ENCODE measurements at regions of chr2 and their contacts with region 1.

Region 1: GRCh38 chr2:138827426-138828054 is 47.4 kb upstream of the NXPH2 start:
- DNase-seq: peak; percentile 32 to 71
- H3K4me3 ChIP-seq: no peak overlapping the region
- H3K4me1 ChIP-seq: peaks cover 5% of the 10 kb centered on the region; the same call in 1 of the 2 replicates
- H3K27me3 ChIP-seq: no peaks in the 10 kb centered on the region

Region 2: GRCh38 chr2:137892739-137893138 is 934.8 kb before region 1 on chr2:
- in situ Hi-C with region 1: loop called (anchors 10 kb)
- DNase-seq: peak; percentile 8
- H3K4me3 ChIP-seq: no peak overlapping the region
- H3K4me1 ChIP-seq: peaks cover 3% of the 10 kb centered on the region; the same call in 1 of the 2 replicates
- H3K27me3 ChIP-seq: no peaks in the 10 kb centered on the region